Gastrocnemius medialis (tissue), 4 donors: ENCODE measurements at regions of chr9 and their contacts with region 1.

Region 1: GRCh38 chr9:122991370-122991830 is 42.1 kb upstream of the GPR21 start:
- DNase-seq: peak in 1 of 2 donors; percentile 12
- ATAC-seq: peak; percentile 78 to 80
- H3K4me3 ChIP-seq: no peak overlapping the region
- H3K27ac ChIP-seq: no peak overlapping the region
- H3K4me1 ChIP-seq: no peaks in the 10 kb centered on the region
- H3K27me3 ChIP-seq: no peaks in the 10 kb centered on the region
- CTCF ChIP-seq: peak; percentile 40 to 68 (median 59)
- POLR2A ChIP-seq: no peak

Region 2: GRCh38 chr9:122464633-122465567 is 526.5 kb before region 1 on chr9:
- in situ Hi-C with region 1: loop called in 3 of 4 experiments (anchors 25 kb)
- intact Hi-C with region 1: loop called (anchors 10 kb)
- DNase-seq: peak; percentile 43 to 52
- ATAC-seq: peak; percentile 82 to 97
- H3K4me3 ChIP-seq: peak overlapping the region; percentile 26 to 62 (median 36)
- H3K27ac ChIP-seq: no peak overlapping the region
- H3K4me1 ChIP-seq: peaks cover 5 to 9% of the 10 kb centered on the region in 2 donors
- H3K27me3 ChIP-seq: peaks cover 0 to 3% (median 0%) of the 10 kb centered on the region in 3 donors
- CTCF ChIP-seq: peak; percentile 62 to 80 (median 71)
- POLR2A ChIP-seq: no peak

Region 3: GRCh38 chr9:122827761-122828093 is 163.7 kb before region 1 on chr9:
- in situ Hi-C with region 1: loop called in 1 of 4 experiments (anchors 25 kb)
- intact Hi-C with region 1: no loop called
- DNase-seq: no peak
- ATAC-seq: peak in 1 of 2 donors; percentile 29
- H3K4me3 ChIP-seq: peak overlapping the region; percentile 77 to 100 (median 99)
- H3K27ac ChIP-seq: peak overlapping the region; percentile 88 to 98 (median 98)
- H3K4me1 ChIP-seq: peaks cover 14 to 16% of the 10 kb centered on the region in 2 donors
- H3K27me3 ChIP-seq: no peaks in the 10 kb centered on the region
- CTCF ChIP-seq: no peak
- POLR2A ChIP-seq: no peak

Region 4: GRCh38 chr9:123002754-123003153 is 11.4 kb after region 1 on chr9:
- in situ Hi-C with region 1: no loop called
- intact Hi-C with region 1: no loop called
- DNase-seq: no peak
- ATAC-seq: no peak
- H3K4me3 ChIP-seq: no peak overlapping the region
- H3K27ac ChIP-seq: peak overlapping the region in 1 of 4 donors; percentile 43
- H3K4me1 ChIP-seq: peaks cover 0 to 8% of the 10 kb centered on the region in 2 donors
- H3K27me3 ChIP-seq: no peaks in the 10 kb centered on the region
- CTCF ChIP-seq: no peak
- POLR2A ChIP-seq: no peak